ENCODE measurements at regions of chr4 and their contacts with region 1.

Region 1: GRCh38 chr4:98928505-98929340 is at the start of gene EIF4E:
- DNase-seq: peak; percentile 90 to 100 (median 95)
- ATAC-seq: peak; percentile 82
- H3K4me3 ChIP-seq: peak within 1 kb of the TSS; percentile 96
- H3K4me3 Mint-ChIP-seq: peak within 1 kb of the TSS; percentile 98
- H3K27ac ChIP-seq: peak within 1 kb of the TSS; percentile 85 to 94
- H3K27ac Mint-ChIP-seq: peak within 1 kb of the TSS; percentile 98
- H3K4me1 ChIP-seq: peaks cover 17% of the 10 kb centered on the region
- H3K4me1 Mint-ChIP-seq: peaks cover 46% of the 10 kb centered on the region
- H3K27me3 ChIP-seq: no peaks in the 10 kb centered on the region
- H3K27me3 Mint-ChIP-seq: no peaks in the 10 kb centered on the region
- CTCF ChIP-seq: peak; percentile 34
- total RNA-seq, gene EIF4E: 47.2 to 49.2 TPM

Region 2: DNA sequence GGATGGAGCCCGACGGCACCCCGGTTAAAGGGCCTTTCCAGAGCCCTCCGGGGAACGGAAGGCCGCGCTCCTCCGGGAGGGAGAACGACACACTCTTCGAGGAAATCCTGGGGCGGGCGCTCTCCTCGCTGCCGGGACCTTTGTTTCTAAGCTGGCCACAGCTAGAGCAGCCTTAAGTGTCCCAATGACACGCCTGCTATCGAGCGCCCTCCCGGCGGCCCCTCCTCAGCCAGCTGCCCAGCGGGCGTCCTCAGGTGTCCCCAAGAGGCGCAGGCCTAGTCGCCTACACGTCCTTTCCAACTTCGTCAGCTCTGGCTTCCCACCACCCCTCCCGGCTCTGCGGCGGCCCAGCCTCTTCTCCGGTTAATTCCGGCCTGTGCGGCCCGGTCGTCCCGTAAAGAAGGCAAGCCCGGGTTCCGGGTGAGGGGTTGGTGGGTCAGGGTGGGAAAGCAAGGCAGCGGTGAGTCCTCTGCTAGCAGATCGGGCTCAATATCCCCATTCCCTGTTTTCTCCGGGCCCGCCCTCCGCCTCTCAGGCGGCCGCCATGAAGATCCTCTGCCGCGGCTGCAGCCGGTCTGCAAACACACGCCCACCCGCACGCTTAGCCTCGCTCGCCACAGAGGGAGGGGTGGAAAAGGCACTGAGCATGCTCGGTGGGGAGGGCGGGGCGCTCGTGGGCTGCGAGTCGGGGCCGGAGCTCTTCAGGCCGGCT is 668.0 kb before region 1 on chr4:
- CTCF ChIA-PET with region 1: no interaction called
- POLR2A ChIA-PET with region 1: interaction called, 22 read pairs
- intact Hi-C with region 1: loop called in 1 of 2 experiments (anchors 5 kb)
- DNase-seq: peak in 13 of 14 experiments; percentile 76 to 96 (median 89)
- ATAC-seq: peak; percentile 68
- H3K4me3 ChIP-seq: peak overlapping the region; percentile 96
- H3K4me3 Mint-ChIP-seq: peak overlapping the region; percentile 95
- H3K27ac ChIP-seq: peak overlapping the region; percentile 81 to 82
- H3K27ac Mint-ChIP-seq: peak overlapping the region; percentile 88
- H3K4me1 ChIP-seq: peaks cover 19% of the 10 kb centered on the region
- H3K4me1 Mint-ChIP-seq: peaks cover 61% of the 10 kb centered on the region
- H3K27me3 ChIP-seq: no peaks in the 10 kb centered on the region
- H3K27me3 Mint-ChIP-seq: no peaks in the 10 kb centered on the region
- CTCF ChIP-seq: no peak

Region 3: GRCh38 chr4:98658287-98659105 is 270.2 kb before region 1 on chr4 and contains the start of gene TSPAN5:
- CTCF ChIA-PET with region 1: interaction called, 5 read pairs
- POLR2A ChIA-PET with region 1: interaction called, 15 read pairs
- intact Hi-C with region 1: loop called in 1 of 2 experiments (anchors 2 kb)
- DNase-seq: peak; percentile 56 to 93 (median 84)
- ATAC-seq: peak; percentile 67
- H3K4me3 ChIP-seq: peak within 1 kb of the TSS; percentile 89
- H3K4me3 Mint-ChIP-seq: peak within 1 kb of the TSS; percentile 89
- H3K27ac ChIP-seq: peak within 1 kb of the TSS in 1 of 2 donors; percentile 39
- H3K27ac Mint-ChIP-seq: peak within 1 kb of the TSS; percentile 98
- H3K4me1 ChIP-seq: peaks cover 50% of the 10 kb centered on the region
- H3K4me1 Mint-ChIP-seq: peaks cover 87% of the 10 kb centered on the region
- H3K27me3 ChIP-seq: no peaks in the 10 kb centered on the region
- H3K27me3 Mint-ChIP-seq: no peaks in the 10 kb centered on the region
- CTCF ChIP-seq: no peak
- total RNA-seq, gene TSPAN5: 1.8 to 2.8 TPM

Region 4: GRCh38 chr4:98828801-98829200 is 99.9 kb before region 1 on chr4:
- CTCF ChIA-PET with region 1: no interaction called
- POLR2A ChIA-PET with region 1: no interaction called
- intact Hi-C with region 1: no loop called
- DNase-seq: peak in 13 of 14 experiments; percentile 0 to 54 (median 17)
- ATAC-seq: no peak
- H3K4me3 ChIP-seq: no peak overlapping the region
- H3K4me3 Mint-ChIP-seq: no peak overlapping the region
- H3K27ac ChIP-seq: no peak overlapping the region
- H3K27ac Mint-ChIP-seq: no peak overlapping the region
- H3K4me1 ChIP-seq: no peaks in the 10 kb centered on the region
- H3K4me1 Mint-ChIP-seq: no peaks in the 10 kb centered on the region
- H3K27me3 ChIP-seq: no peaks in the 10 kb centered on the region
- H3K27me3 Mint-ChIP-seq: no peaks in the 10 kb centered on the region
- CTCF ChIP-seq: peak; percentile 20

Region 5: DNA sequence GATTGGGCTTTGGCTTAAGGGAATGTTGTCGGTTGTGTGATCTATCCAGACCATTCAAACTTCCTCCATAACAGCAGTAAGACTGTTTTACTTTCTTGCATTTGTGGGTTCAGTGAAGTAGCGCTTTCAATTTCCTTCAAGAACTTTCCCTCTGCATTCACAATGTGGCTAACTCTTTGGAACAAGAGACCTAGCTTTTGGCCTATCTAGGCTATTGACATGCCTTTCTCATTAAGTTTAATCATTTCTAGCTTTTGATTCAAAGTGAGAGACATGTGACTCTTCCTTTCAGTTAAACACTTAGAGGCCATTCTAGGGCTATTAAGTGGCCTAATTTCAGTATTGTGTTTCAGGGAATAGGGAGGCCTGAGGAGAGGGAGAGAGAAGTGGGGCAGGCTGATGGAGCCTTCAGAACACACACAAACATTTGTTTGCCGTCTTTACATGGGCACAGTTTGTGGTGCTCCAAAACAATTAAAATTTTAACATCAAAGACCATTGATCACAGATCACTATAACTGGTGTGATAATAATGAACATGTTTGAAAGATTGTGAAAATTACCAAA is 125.8 kb after region 1 on chr4:
- CTCF ChIA-PET with region 1: interaction called, 7 read pairs
- POLR2A ChIA-PET with region 1: interaction called, 7 read pairs
- intact Hi-C with region 1: loop called in 1 of 2 experiments (anchors 1 kb)
- DNase-seq: no peak
- ATAC-seq: no peak
- H3K4me3 ChIP-seq: no peak overlapping the region
- H3K4me3 Mint-ChIP-seq: no peak overlapping the region
- H3K27ac ChIP-seq: no peak overlapping the region
- H3K27ac Mint-ChIP-seq: peak overlapping the region; percentile 10
- H3K4me1 ChIP-seq: peaks cover 5% of the 10 kb centered on the region
- H3K4me1 Mint-ChIP-seq: peaks cover 12% of the 10 kb centered on the region
- H3K27me3 ChIP-seq: no peaks in the 10 kb centered on the region
- H3K27me3 Mint-ChIP-seq: no peaks in the 10 kb centered on the region
- CTCF ChIP-seq: no peak

Region 6: DNA sequence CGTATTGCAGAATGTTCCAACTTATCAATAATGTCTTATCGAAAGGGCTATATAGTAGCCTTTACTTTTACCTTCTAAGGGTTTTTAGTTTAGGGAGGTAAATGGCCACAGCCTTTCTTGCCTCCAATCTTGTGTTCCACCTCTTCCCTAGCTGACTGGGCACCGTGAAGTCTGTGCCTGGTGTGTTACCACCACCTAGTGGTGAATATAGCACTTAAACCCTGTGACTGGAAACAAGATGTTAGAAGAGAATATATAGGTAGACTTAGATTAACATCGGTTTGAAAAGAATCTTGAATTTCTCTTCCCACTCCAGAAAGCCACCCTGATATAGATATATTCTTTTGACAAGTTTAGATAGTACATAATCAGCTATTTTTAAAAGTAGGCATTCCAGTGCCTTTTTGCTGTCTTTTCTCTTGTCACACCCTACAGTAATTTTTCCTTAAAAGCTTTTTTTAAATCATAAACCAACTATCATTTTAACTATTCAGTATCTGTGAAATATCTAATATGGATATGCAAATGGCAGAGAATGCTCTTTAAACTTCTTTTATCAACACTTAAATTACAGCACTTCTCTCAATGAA is 534.2 kb after region 1 on chr4:
- CTCF ChIA-PET with region 1: no interaction called
- POLR2A ChIA-PET with region 1: no interaction called
- intact Hi-C with region 1: loop called in 1 of 2 experiments (anchors 10 kb)
- DNase-seq: peak; percentile 4 to 67 (median 25)
- ATAC-seq: peak; percentile 70
- H3K4me3 ChIP-seq: no peak overlapping the region
- H3K4me3 Mint-ChIP-seq: no peak overlapping the region
- H3K27ac ChIP-seq: no peak overlapping the region
- H3K27ac Mint-ChIP-seq: no peak overlapping the region
- H3K4me1 ChIP-seq: no peaks in the 10 kb centered on the region
- H3K4me1 Mint-ChIP-seq: no peaks in the 10 kb centered on the region
- H3K27me3 ChIP-seq: no peaks in the 10 kb centered on the region
- H3K27me3 Mint-ChIP-seq: peaks cover 18% of the 10 kb centered on the region
- CTCF ChIP-seq: peak; percentile 83

Region 7: GRCh38 chr4:99894161-99894997 is 965.7 kb after region 1 on chr4 and contains the start of gene LAMTOR3:
- CTCF ChIA-PET with region 1: no interaction called
- POLR2A ChIA-PET with region 1: interaction called, 5 read pairs
- intact Hi-C with region 1: loop called in 1 of 2 experiments (anchors 10 kb)
- DNase-seq: peak; percentile 76 to 97 (median 88)
- ATAC-seq: peak; percentile 98
- H3K4me3 ChIP-seq: peak within 1 kb of the TSS; percentile 61
- H3K4me3 Mint-ChIP-seq: peak within 1 kb of the TSS; percentile 99
- H3K27ac ChIP-seq: peak within 1 kb of the TSS; percentile 71 to 80
- H3K27ac Mint-ChIP-seq: peak within 1 kb of the TSS; percentile 96
- H3K4me1 ChIP-seq: peaks cover 23% of the 10 kb centered on the region
- H3K4me1 Mint-ChIP-seq: peaks cover 53% of the 10 kb centered on the region
- H3K27me3 ChIP-seq: no peaks in the 10 kb centered on the region
- H3K27me3 Mint-ChIP-seq: no peaks in the 10 kb centered on the region
- CTCF ChIP-seq: no peak
- total RNA-seq, gene LAMTOR3: 32.0 to 32.8 TPM

Measured in CD4-positive, alpha-beta T cell (primary cell).